ENCODE measurements at regions of chr4 and their contacts with region 1.

Region 1: GRCh38 chr4:17400686-17401085 is 111.2 kb downstream of the QDPR start:
- DNase-seq: no peak
- H3K4me3 ChIP-seq: no peak overlapping the region
- H3K27ac ChIP-seq: no peak overlapping the region
- H3K4me1 ChIP-seq: no peaks in the 10 kb centered on the region
- H3K27me3 ChIP-seq: no peaks in the 10 kb centered on the region
- CTCF ChIP-seq: no peak
- EP300 ChIP-seq: no peak
- POLR2A ChIP-seq: no peak

Region 2: GRCh38 chr4:17288151-17288550 is 112.5 kb before region 1 on chr4:
- in situ Hi-C with region 1: no loop called
- intact Hi-C with region 1: loop called (anchors 2 kb)
- DNase-seq: no peak
- H3K4me3 ChIP-seq: no peak overlapping the region
- H3K27ac ChIP-seq: no peak overlapping the region
- H3K4me1 ChIP-seq: no peaks in the 10 kb centered on the region
- H3K27me3 ChIP-seq: no peaks in the 10 kb centered on the region
- CTCF ChIP-seq: no peak
- EP300 ChIP-seq: no peak
- POLR2A ChIP-seq: no peak